Mammary epithelial cell (primary cell): ENCODE measurements at regions of chr9 and their contacts with region 1.

Region 1: GRCh38 chr9:88388172-88388885 is at the start of gene SPIN1:
- DNase-seq: no peak
- H3K4me3 ChIP-seq: peak within 1 kb of the TSS; percentile 64 to 93 (median 77)
- H3K27ac ChIP-seq: peak within 1 kb of the TSS; percentile 91
- H3K4me1 ChIP-seq: peaks cover 18% of the 10 kb centered on the region
- H3K27me3 ChIP-seq: no peaks in the 10 kb centered on the region
- CTCF ChIP-seq: peak; percentile 28 to 35
- total RNA-seq, gene SPIN1: 86.7 to 98.2 TPM

Region 2: GRCh38 chr9:87950765-87951488 is 437.4 kb before region 1 on chr9:
- CTCF ChIA-PET with region 1: no interaction called
- dilution Hi-C with region 1: no loop called
- in situ Hi-C with region 1: no loop called
- intact Hi-C with region 1: loop called (anchors 1 kb)
- DNase-seq: peak; percentile 43
- H3K4me3 ChIP-seq: no peak overlapping the region
- H3K27ac ChIP-seq: no peak overlapping the region
- H3K4me1 ChIP-seq: no peaks in the 10 kb centered on the region
- H3K27me3 ChIP-seq: no peaks in the 10 kb centered on the region
- CTCF ChIP-seq: peak; percentile 61 to 75

Region 3: GRCh38 chr9:88173378-88173999 is 214.8 kb before region 1 on chr9:
- CTCF ChIA-PET with region 1: no interaction called
- dilution Hi-C with region 1: loop called (anchors 25 kb)
- in situ Hi-C with region 1: loop called in 1 of 2 experiments (anchors 25 kb)
- intact Hi-C with region 1: loop called (anchors 1 kb)
- DNase-seq: peak; percentile 67
- H3K4me3 ChIP-seq: no peak overlapping the region
- H3K27ac ChIP-seq: no peak overlapping the region
- H3K4me1 ChIP-seq: no peaks in the 10 kb centered on the region
- H3K27me3 ChIP-seq: no peaks in the 10 kb centered on the region
- CTCF ChIP-seq: peak; percentile 80 to 84

Region 4: DNA sequence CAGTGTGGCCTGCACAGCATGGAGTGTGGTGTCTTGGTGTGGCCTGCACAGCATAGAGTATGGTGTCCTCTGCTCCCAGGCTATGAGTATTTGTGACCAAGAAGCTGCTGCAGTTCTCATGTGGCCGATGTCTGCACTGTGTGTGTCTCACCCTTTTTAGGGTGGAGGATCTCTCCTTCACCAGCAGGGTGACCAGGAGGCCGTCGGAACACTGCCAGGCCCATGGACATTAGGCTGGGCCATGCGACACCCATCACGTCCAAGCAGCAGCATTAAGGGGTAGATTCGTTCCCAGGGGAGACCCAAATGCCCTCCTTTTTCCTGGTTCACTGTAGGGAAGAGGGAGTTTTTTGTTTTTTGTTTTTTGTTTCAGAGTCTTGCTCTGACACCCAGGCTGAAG is 115.3 kb before region 1 on chr9:
- CTCF ChIA-PET with region 1: no interaction called
- dilution Hi-C with region 1: no loop called
- in situ Hi-C with region 1: no loop called
- intact Hi-C with region 1: loop called (anchors 5 kb)
- DNase-seq: no peak
- H3K4me3 ChIP-seq: no peak overlapping the region
- H3K27ac ChIP-seq: no peak overlapping the region
- H3K4me1 ChIP-seq: peaks cover 16% of the 10 kb centered on the region
- H3K27me3 ChIP-seq: no peaks in the 10 kb centered on the region
- CTCF ChIP-seq: no peak

Region 5: DNA sequence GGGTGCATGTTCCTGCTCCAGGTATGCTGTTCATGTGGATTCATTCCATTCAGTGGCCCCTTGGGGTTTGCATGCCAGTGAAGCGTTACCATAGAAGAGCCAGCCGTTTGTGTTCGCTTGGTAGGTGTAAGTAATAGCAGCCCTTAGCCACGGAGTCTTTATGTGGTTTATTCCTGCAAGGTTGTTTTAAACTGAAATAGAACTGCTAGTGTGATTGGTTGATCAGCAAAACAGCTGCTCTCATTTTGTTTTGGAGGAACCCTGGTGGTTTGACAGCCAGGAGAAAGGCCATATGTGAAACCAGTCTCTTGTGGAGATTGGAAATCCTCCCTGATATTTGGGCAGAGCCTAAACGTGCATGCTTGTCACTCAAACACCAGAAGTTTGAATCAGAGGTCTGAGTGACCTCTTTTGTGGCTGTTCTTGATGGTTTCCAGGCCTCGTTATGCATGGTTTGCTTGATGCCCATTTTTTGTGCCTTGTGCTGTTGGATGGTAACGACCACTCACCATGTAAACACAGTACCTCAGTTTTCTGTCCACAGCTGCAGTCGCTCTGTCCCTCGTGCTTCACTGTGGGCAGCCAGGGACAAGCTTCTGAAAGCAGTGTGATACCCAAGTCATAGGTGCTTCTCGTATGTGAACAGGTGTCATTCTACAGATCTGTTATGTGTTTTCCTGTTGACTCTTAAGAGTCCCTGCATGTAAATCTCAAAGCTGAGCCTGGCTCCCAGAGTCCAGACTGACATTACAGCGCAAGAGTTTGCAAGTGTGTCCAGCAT is 88.4 kb after region 1 on chr9:
- CTCF ChIA-PET with region 1: no interaction called
- dilution Hi-C with region 1: no loop called
- in situ Hi-C with region 1: no loop called
- intact Hi-C with region 1: loop called (anchors 2 kb)
- DNase-seq: no peak
- H3K4me3 ChIP-seq: no peak overlapping the region
- H3K27ac ChIP-seq: peak overlapping the region; percentile 50
- H3K4me1 ChIP-seq: peaks cover 28% of the 10 kb centered on the region
- H3K27me3 ChIP-seq: no peaks in the 10 kb centered on the region
- CTCF ChIP-seq: no peak